ENCODE measurements at regions of chr10 and their contacts with region 1.

Region 1: GRCh38 chr10:62183442-62183841 is 85.2 kb downstream of the RTKN2 start:
- DNase-seq: no peak
- H3K4me3 ChIP-seq: no peak overlapping the region
- H3K27ac ChIP-seq: no peak overlapping the region
- H3K4me1 ChIP-seq: no peaks in the 10 kb centered on the region
- H3K27me3 ChIP-seq: no peaks in the 10 kb centered on the region
- CTCF ChIP-seq: no peak
- POLR2A ChIP-seq: no peak

Region 2: GRCh38 chr10:62244780-62245467 is 61.5 kb after region 1 on chr10:
- intact Hi-C with region 1: loop called (anchors 10 kb)
- DNase-seq: no peak
- H3K4me3 ChIP-seq: no peak overlapping the region
- H3K27ac ChIP-seq: no peak overlapping the region
- H3K4me1 ChIP-seq: no peaks in the 10 kb centered on the region
- H3K27me3 ChIP-seq: no peaks in the 10 kb centered on the region
- CTCF ChIP-seq: peak; percentile 73 to 85 (median 77)
- POLR2A ChIP-seq: no peak